CD14-positive monocyte (primary cell): ENCODE measurements at regions of chr16 and their contacts with region 1.

Region 1: GRCh38 chr16:83878838-83879237 is 20.1 kb upstream of the MLYCD start:
- DNase-seq: peak; percentile 18 to 43 (median 28)
- H3K4me3 ChIP-seq: no peak overlapping the region
- H3K4me3 Mint-ChIP-seq: no peak overlapping the region
- H3K27ac ChIP-seq: no peak overlapping the region
- H3K27ac Mint-ChIP-seq: no peak overlapping the region
- H3K4me1 ChIP-seq: no peaks in the 10 kb centered on the region
- H3K4me1 Mint-ChIP-seq: no peaks in the 10 kb centered on the region
- H3K27me3 ChIP-seq: no peaks in the 10 kb centered on the region
- H3K27me3 Mint-ChIP-seq: peaks cover 1 to 12% (median 6%) of the 10 kb centered on the region in 3 donors
- CTCF ChIP-seq: peak; percentile 63

Region 2: GRCh38 chr16:83552228-83552627 is 326.6 kb before region 1 on chr16:
- intact Hi-C with region 1: loop called in 1 of 2 experiments (anchors 10 kb)
- DNase-seq: no peak
- H3K4me3 ChIP-seq: no peak overlapping the region
- H3K4me3 Mint-ChIP-seq: no peak overlapping the region
- H3K27ac ChIP-seq: no peak overlapping the region
- H3K27ac Mint-ChIP-seq: no peak overlapping the region
- H3K4me1 ChIP-seq: no peaks in the 10 kb centered on the region
- H3K4me1 Mint-ChIP-seq: no peaks in the 10 kb centered on the region
- H3K27me3 ChIP-seq: peaks cover 0 to 2% of the 10 kb centered on the region in 2 donors
- H3K27me3 Mint-ChIP-seq: peaks cover 2 to 8% (median 3%) of the 10 kb centered on the region in 3 donors
- CTCF ChIP-seq: no peak

Region 3: DNA sequence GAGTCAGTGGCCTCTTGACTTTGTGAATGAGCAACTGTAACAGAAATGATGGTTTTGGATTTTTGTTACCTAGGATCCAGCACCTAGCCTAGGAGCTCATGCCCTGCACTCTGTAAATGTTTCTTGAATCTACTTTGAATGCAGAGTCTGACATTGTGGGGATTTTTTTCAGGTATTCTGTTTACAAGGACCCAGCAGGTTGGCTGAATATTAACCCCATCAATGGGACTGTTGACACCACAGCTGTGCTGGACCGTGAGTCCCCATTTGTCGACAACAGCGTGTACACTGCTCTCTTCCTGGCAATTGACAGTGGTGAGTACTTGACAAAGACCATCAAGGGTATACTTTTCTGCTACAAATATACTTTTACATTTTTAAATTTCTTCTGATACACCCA is 130.9 kb before region 1 on chr16:
- intact Hi-C with region 1: no loop called
- DNase-seq: no peak
- H3K4me3 ChIP-seq: no peak overlapping the region
- H3K4me3 Mint-ChIP-seq: no peak overlapping the region
- H3K27ac ChIP-seq: no peak overlapping the region
- H3K27ac Mint-ChIP-seq: no peak overlapping the region
- H3K4me1 ChIP-seq: peaks cover 17 to 18% of the 10 kb centered on the region in 2 donors
- H3K4me1 Mint-ChIP-seq: peaks cover 21% of the 10 kb centered on the region
- H3K27me3 ChIP-seq: no peaks in the 10 kb centered on the region
- H3K27me3 Mint-ChIP-seq: peaks cover 3 to 4% (median 3%) of the 10 kb centered on the region in 3 donors
- CTCF ChIP-seq: no peak

Region 4: DNA sequence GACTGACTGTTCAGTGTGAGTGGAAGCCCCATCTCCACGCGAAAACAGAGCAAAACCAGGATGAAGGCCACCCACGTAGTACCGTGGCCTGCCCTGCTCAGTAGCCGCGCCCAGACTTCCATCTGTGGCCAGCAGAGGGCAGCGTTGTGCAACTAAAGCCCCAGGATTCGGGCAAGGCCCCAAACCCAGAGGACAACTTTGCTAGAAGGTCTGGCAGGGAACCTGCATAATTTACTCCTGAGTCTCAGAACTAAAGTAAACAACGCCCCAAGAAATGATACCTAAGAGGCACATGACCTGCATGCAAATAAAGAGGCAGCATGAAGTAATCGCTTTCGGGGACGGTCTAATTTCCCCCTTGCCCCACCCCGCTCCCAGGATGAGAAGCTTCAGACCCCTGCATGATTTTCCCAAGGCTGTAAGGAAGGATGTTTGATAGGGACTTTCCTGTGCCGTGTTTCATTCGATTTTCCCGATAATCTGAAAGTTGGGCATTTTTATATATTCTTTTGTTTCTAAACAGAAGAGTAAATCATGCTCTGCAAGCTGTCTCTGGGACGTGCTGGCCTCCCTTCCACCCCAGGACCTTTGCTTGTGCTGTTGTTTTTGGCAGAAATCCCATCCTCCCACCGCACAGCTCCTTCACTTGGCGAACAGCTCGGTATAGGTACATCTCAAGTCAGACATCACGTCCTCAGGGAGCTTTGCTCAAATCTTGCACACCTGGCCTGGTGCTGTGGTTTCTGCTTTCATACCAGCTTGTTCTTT is 52.5 kb before region 1 on chr16:
- intact Hi-C with region 1: loop called (anchors 5 kb)
- DNase-seq: peak; percentile 68 to 73 (median 69)
- H3K4me3 ChIP-seq: no peak overlapping the region
- H3K4me3 Mint-ChIP-seq: no peak overlapping the region
- H3K27ac ChIP-seq: no peak overlapping the region
- H3K27ac Mint-ChIP-seq: peak overlapping the region in 1 of 7 donors; percentile 30
- H3K4me1 ChIP-seq: no peaks in the 10 kb centered on the region
- H3K4me1 Mint-ChIP-seq: peaks cover 5% of the 10 kb centered on the region
- H3K27me3 ChIP-seq: no peaks in the 10 kb centered on the region
- H3K27me3 Mint-ChIP-seq: peaks cover 0 to 7% (median 2%) of the 10 kb centered on the region in 3 donors
- CTCF ChIP-seq: peak; percentile 92

Region 5: GRCh38 chr16:83913245-83913633 is 34.4 kb after region 1 on chr16:
- intact Hi-C with region 1: no loop called
- DNase-seq: no peak
- H3K4me3 ChIP-seq: no peak overlapping the region
- H3K4me3 Mint-ChIP-seq: no peak overlapping the region
- H3K27ac ChIP-seq: no peak overlapping the region
- H3K27ac Mint-ChIP-seq: peak overlapping the region in 3 of 7 donors; percentile 32 to 58 (median 45)
- H3K4me1 ChIP-seq: no peaks in the 10 kb centered on the region
- H3K4me1 Mint-ChIP-seq: no peaks in the 10 kb centered on the region
- H3K27me3 ChIP-seq: no peaks in the 10 kb centered on the region
- H3K27me3 Mint-ChIP-seq: peaks cover 0 to 1% (median 0%) of the 10 kb centered on the region in 3 donors
- CTCF ChIP-seq: no peak